Activated CD4-positive, alpha-beta T cell treated with anti-CD3 and anti-CD28 coated beads, Interleukin-2, amount 10 ng/mL, durations not matched to agents 7 days and 5 days (primary cell): ENCODE measurements at regions of chr12 and their contacts with region 1.

Region 1: GRCh38 chr12:25386831-25387731 is 136.4 kb upstream of the KRAS start:
- DNase-seq: peak; percentile 88
- H3K4me3 Mint-ChIP-seq: peak overlapping the region; percentile 94
- H3K27ac Mint-ChIP-seq: peak overlapping the region; percentile 100
- H3K4me1 Mint-ChIP-seq: peaks cover 58% of the 10 kb centered on the region
- H3K27me3 Mint-ChIP-seq: peaks cover 2% of the 10 kb centered on the region

Region 2: GRCh38 chr12:25213338-25213737 is 173.7 kb before region 1 on chr12:
- CTCF ChIA-PET with region 1: interaction called, 13 read pairs
- POLR2A ChIA-PET with region 1: interaction called, 4 read pairs
- DNase-seq: no peak
- H3K4me3 Mint-ChIP-seq: no peak overlapping the region
- H3K27ac Mint-ChIP-seq: no peak overlapping the region
- H3K4me1 Mint-ChIP-seq: no peaks in the 10 kb centered on the region
- H3K27me3 Mint-ChIP-seq: no peaks in the 10 kb centered on the region

Region 3: DNA sequence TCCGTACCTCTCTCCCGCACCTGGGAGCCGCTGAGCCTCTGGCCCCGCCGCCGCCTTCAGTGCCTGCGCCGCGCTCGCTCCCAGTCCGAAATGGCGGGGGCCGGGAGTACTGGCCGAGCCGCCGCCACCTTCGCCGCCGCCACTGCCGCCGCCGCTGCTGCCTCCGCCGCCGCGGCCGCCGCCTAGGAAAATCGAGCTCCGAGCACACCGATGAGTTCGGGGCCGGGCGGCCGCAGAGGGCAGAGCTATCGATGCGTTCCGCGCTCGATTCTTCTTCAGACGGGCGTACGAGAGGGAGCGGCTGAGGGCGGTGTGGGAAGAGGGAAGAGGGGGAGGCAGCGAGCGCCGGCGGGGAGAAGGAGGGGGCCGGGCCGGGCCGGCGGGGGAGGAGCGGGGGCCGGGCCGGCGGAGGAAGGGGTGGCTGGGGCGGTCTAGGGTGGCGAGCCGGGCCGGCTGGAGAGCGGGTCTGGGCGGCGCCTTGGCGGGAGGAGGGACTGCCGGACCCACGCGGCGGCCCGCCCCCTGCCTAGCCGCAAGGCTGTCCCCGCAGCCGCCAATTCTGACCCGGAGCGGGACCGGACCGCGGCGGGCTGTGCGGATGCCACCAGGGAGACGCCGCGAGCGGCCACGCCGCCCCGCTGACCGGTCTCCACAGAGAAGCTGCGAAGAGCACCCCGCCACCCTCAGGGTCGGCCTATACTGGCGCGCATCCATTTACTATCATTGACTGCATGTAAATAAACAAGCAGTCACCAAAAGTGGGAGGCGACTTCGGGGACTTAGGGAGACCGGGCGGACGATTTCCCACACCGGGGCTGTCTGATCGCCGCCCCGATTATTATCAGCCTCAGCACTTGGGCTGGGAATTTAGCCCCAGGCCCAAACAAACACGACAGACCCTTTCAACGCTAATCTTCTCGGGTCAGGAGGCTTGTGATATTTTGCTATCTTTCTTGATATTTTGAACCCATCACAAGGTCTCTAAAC is 136.0 kb before region 1 on chr12 and contains the start of gene KRAS:
- CTCF ChIA-PET with region 1: interaction called, 4 read pairs
- POLR2A ChIA-PET with region 1: interaction called, 10 read pairs
- DNase-seq: peak; percentile 91
- H3K4me3 Mint-ChIP-seq: peak within 1 kb of the TSS; percentile 86
- H3K27ac Mint-ChIP-seq: peak within 1 kb of the TSS; percentile 92
- H3K4me1 Mint-ChIP-seq: peaks cover 37% of the 10 kb centered on the region
- H3K27me3 Mint-ChIP-seq: peaks cover 8% of the 10 kb centered on the region
- total RNA-seq, gene KRAS: 32.5 to 34.6 TPM